Prostate gland (tissue), 2 donors: ENCODE measurements at regions of chr4 and their contacts with region 1.

Region 1: DNA sequence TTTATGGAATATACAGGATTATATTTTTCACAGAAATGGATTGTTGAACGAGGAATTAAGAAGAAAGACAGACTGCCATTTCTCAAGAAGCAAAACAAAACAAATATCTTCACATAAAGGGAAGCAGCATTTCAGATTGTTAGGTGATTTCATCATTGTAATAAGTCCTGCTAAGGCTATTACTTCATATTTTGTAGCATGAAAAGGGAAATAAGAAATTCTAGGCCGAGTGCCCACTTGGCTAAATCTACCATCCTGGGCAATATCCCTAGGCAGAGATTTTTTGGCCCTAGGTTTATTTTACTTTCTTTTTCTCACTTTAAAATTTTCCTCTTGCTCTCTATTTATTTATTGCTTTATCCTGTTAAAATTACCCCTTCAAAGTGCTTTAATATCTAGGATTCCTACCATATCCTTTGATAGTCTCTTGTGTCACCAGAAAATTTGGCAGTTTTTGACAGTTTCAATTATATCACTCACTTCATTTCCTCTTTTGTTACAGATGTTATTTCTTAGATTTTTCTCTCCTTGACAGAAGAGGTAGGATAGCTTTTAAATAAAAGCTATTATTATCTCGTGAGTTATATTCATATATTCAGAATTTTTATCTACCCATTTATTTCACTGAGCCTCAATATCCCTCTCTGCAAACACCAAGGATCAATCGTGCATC is 142.3 kb downstream of the PDGFC start:
- DNase-seq: peak; percentile 17
- H3K4me3 ChIP-seq: no peak overlapping the region
- H3K27ac ChIP-seq: peak overlapping the region in 1 of 2 donors; percentile 4
- H3K4me1 ChIP-seq: no peaks in the 10 kb centered on the region
- H3K27me3 ChIP-seq: no peaks in the 10 kb centered on the region
- CTCF ChIP-seq: no peak
- POLR2A ChIP-seq: no peak

Region 2: DNA sequence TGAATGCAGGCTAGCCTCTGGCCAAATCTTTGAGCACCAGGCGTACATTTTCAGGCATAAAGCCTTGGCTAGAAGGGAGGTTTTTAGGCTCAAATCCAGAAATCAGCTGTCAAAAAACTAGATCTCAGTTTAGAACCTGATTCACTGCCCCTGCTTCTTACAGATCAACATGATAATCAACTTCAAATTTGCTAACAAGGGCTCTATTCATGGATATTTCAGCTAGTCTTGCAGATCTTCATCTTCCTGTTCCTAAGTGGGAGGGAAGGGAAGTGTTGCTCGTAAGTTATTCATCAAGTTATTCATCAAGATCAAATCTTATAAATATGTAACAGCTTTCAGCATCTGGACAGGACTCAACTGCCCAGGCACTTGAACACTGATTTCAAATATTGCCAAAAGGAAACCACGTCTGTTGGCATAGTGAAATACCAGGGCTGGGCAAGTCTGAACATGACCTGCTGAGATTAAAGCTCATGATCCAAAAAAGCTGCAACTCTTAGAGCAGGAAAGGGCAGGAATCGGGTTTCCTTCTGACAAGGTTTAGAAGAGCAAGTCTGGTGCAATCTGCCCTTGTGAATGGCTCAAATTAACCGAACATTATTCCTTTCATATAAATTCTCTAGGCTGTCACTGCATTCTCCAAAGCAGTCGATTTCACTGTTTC is 58.0 kb before region 1 on chr4:
- intact Hi-C with region 1: loop called (anchors 10 kb)
- DNase-seq: peak; percentile 90
- H3K4me3 ChIP-seq: no peak overlapping the region
- H3K27ac ChIP-seq: peak overlapping the region in 1 of 2 donors; percentile 65
- H3K4me1 ChIP-seq: no peaks in the 10 kb centered on the region
- H3K27me3 ChIP-seq: no peaks in the 10 kb centered on the region
- CTCF ChIP-seq: no peak
- POLR2A ChIP-seq: no peak

Region 3: GRCh38 chr4:156941940-156942548 is 112.7 kb after region 1 on chr4:
- intact Hi-C with region 1: loop called (anchors 10 kb)
- DNase-seq: peak; percentile 55
- H3K4me3 ChIP-seq: no peak overlapping the region
- H3K27ac ChIP-seq: peak overlapping the region; percentile 24 to 28
- H3K4me1 ChIP-seq: no peaks in the 10 kb centered on the region
- H3K27me3 ChIP-seq: no peaks in the 10 kb centered on the region
- CTCF ChIP-seq: no peak
- POLR2A ChIP-seq: no peak